AG04449 (cell line): ENCODE measurements at regions of chr6 and their contacts with region 1.

Region 1: GRCh38 chr6:16409531-16410441 is 171.4 kb downstream of the GMPR start:
- DNase-seq: no peak
- H3K4me3 ChIP-seq: no peak overlapping the region
- CTCF ChIP-seq: peak; percentile 90

Region 2: DNA sequence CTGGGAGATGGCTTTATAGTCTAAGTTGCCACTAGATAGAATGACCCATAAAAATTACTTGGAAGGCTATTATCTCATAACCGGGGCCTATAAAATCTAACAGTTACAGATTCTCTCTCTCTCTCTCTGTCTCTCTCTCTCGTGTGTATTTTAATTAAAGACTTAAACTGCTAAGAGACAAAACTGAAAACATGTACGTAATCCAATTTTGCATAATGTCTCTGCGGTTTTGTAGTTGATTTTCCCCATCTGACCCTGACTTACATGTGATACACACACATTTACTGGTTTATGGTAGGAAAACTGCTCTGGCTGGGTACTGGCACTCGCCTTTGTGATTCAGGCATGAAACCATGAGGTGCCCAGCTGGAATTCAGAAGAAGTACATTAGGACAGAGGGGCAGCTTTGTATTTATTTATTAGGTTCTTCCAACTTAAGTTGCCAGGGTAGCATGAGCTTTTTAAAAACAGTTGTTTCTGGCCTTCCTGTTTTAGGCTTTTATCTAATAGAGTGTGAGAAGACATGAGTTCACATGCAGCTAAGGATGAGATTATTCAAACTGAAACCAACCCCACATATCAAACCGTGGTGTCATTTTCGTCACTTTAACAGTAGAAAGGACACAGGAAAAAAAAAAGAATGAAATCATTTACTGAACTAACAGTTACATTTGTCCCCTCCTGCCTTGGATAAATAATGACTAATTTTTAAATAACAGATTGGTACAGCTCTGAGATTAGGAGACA is 11.1 kb after region 1 on chr6:
- CTCF ChIA-PET with region 1: interaction called, 31 read pairs
- POLR2A ChIA-PET with region 1: no interaction called
- DNase-seq: peak; percentile 52
- H3K4me3 ChIP-seq: no peak overlapping the region
- CTCF ChIP-seq: no peak

Region 3: DNA sequence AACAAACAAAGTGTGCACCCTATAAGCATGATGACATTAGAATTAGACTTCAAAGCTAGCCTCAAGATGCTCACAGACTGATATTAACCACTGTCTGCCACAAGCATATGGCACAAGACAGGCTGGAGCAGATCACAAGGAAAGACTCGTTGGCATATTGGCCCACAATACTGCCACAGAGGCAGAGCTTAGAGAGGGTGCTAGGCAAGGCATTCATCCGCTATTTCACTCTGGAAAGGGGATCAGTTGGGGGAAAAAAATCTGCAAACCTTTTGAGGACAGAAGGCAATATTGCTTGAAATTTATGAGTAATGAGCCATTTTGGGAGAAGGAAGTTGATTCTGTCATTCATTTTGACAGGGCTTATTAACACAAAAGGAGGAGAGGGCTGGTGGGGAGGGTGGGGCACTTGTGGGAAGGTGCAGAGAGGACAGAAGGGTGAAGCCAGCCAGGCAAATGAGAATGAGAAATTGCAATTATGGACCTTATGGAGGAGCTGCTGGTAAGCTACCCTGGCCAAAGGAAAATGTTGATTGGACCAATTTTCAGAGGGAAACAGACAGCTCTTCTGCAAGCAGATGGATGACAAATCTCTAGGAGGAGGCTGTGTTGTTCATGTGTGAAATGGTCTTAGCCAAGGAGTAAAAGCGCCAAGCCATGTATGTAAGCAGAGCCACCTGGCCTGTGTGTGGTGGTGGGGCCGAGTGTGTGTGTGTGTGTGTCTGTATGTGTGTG is 16.3 kb after region 1 on chr6:
- CTCF ChIA-PET with region 1: interaction called, 31 read pairs
- POLR2A ChIA-PET with region 1: no interaction called
- DNase-seq: no peak
- H3K4me3 ChIP-seq: no peak overlapping the region
- CTCF ChIP-seq: no peak